ENCODE measurements at regions of chr10 and their contacts with region 1.

Region 1: GRCh38 chr10:103765981-103766380 is 89.4 kb downstream of the SH3PXD2A start:
- DNase-seq: peak; percentile 83
- H3K4me3 Mint-ChIP-seq: peak overlapping the region; percentile 38
- H3K27ac Mint-ChIP-seq: peak overlapping the region; percentile 77
- H3K4me1 Mint-ChIP-seq: peaks cover 73% of the 10 kb centered on the region
- H3K27me3 Mint-ChIP-seq: peaks cover 4% of the 10 kb centered on the region

Region 2: GRCh38 chr10:103859161-103860086 is 93.4 kb after region 1 on chr10:
- CTCF ChIA-PET with region 1: interaction called, 5 read pairs
- POLR2A ChIA-PET with region 1: interaction called, 10 read pairs
- DNase-seq: peak; percentile 73
- H3K4me3 Mint-ChIP-seq: no peak overlapping the region
- H3K27ac Mint-ChIP-seq: no peak overlapping the region
- H3K4me1 Mint-ChIP-seq: peaks cover 8% of the 10 kb centered on the region
- H3K27me3 Mint-ChIP-seq: peaks cover 33% of the 10 kb centered on the region